A549 (cell line): ENCODE measurements at regions of chr11 and their contacts with region 1.

Region 1: GRCh38 chr11:77039491-77040400 is 5.5 kb downstream of the B3GNT6 start:
- DNase-seq: no peak
- ATAC-seq: peak; percentile 20 to 58; a peak in 3 of 6 replicates
- H3K4me3 ChIP-seq: no peak overlapping the region
- H3K27ac ChIP-seq: peak overlapping the region in 1 of 2 experiments; percentile 22; a peak in 1 of 6 replicates
- H3K4me1 ChIP-seq: peaks cover 28% of the 10 kb centered on the region
- CTCF ChIP-seq: peak; percentile 31; the same call in 2 of the 3 replicates
- EP300 ChIP-seq: no peak
- POLR2A ChIP-seq: no peak
- RAD21 ChIP-seq: peak; percentile 42 to 47; a peak in 4 of 5 replicates

Region 2: DNA sequence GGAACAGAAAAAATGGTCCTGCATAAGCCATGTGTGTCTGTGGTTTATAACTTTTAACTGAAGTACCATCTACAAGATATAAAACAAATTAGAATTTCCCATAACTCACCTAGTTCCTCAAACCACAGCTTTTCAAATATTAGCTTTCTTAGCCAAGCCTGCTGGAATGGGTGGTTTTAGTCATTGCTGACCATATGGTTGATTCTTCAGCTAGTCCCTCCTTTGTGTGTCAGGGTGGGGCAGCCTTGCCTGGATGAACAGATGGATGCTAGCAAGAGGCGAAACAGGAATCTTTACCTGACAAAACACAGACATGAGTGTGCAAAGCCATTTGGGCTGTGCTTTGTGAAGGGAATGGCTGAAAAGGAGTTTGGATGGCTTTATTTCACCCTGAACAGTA is 12.5 kb before region 1 on chr11:
- CTCF ChIA-PET with region 1: interaction called, 12 read pairs
- POLR2A ChIA-PET with region 1: no interaction called
- DNase-seq: peak in 1 of 2 experiments; percentile 40
- ATAC-seq: peak in 1 of 2 experiments; percentile 22; a peak in 2 of 6 replicates
- H3K4me3 ChIP-seq: no peak overlapping the region
- H3K27ac ChIP-seq: 0 out of 6 replicates have a peak overlapping the region, but pooled peaks of 1 of the 2 experiments have one; percentile 1
- H3K4me1 ChIP-seq: peaks cover 22% of the 10 kb centered on the region
- CTCF ChIP-seq: no peak
- EP300 ChIP-seq: no peak
- POLR2A ChIP-seq: no peak
- RAD21 ChIP-seq: no peak